ENCODE measurements at regions of chr22 and their contacts with region 1.

Region 1: DNA sequence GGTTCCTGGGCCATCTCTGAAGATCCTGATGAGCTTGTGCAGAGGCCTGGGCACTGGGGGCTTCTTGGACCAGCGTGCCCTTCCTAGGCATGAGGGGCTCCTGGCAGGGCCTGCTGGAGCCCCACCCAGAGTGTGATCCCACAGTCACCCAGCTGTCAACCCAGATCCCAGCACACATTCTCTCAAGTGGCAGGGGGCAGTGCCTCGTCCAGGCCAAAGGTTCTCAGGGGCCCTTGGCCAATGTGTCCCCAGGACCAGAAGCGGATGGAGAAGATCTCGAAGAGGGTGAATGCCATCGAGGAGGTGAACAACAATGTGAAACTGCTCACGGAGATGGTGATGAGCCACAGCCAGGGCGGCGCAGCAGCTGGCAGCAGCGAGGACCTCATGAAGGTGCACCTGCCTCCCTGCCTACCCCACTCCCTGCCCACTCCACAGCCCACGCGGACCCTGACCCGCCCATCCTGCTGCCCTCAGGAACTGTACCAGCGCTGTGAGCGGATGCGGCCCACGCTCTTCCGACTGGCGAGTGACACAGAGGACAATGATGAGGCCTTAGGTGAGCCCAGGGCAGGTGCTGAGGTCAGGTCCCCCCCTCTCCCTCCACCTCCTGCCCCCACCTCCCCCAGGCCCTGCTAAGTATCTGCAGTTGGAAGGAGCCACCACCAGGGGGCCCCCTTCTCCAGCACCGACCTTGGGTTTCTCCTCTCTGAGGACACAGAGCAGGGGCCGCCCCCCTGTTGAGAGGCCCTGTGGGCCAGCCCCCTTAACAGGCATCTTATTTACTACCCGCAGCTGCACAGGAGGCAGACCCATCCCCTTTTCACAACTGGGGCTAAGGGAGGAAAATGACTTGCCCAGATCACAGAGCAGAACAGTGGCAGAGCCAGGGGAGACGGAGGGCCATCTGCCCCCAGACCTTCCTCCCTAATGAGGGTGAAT is 14.7 kb downstream of the GGA1 start:
- DNase-seq: peak in 6 of 7 donors; percentile 59 to 85 (median 70)
- H3K4me3 ChIP-seq: no peak overlapping the region
- H3K27ac ChIP-seq: peak overlapping the region in 1 of 5 donors; percentile 21
- H3K4me1 ChIP-seq: peaks cover 0 to 19% of the 10 kb centered on the region in 2 donors
- H3K27me3 ChIP-seq: no peaks in the 10 kb centered on the region
- CTCF ChIP-seq: peak; percentile 47 to 90 (median 66)
- POLR2A ChIP-seq: no peak

Region 2: GRCh38 chr22:37581504-37581903 is 41.8 kb before region 1 on chr22:
- intact Hi-C with region 1: no loop called
- DNase-seq: peak; percentile 52 to 79 (median 66)
- H3K4me3 ChIP-seq: no peak overlapping the region
- H3K27ac ChIP-seq: peak overlapping the region in 2 of 5 donors; percentile 47 to 55
- H3K4me1 ChIP-seq: peaks cover 0 to 17% of the 10 kb centered on the region in 2 donors
- H3K27me3 ChIP-seq: no peaks in the 10 kb centered on the region
- CTCF ChIP-seq: no peak
- POLR2A ChIP-seq: no peak

Region 3: DNA sequence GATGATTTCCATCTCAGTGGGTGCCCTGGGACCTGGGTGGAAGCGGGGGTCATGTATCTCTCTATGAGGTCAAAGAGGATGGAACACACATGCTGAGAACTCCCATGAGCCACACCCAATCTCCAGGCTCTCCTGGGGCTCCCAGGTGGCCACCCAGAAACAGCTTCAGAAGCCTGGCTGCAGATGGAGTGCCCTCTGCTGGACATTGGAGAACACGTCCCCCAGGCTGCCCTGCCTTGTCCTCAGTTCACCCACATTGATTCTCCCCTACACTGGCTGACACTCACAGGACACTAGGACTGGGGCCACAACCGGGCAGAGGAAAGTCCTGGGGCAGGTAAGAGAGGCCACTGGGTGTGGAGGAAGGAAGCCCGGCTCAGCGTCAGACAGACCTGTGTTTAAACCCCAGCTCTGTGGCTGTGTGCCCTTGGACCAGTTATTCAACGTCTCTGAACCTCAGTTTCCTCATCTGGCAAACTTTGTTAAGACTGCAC is 58.3 kb after region 1 on chr22:
- intact Hi-C with region 1: loop called in 1 of 2 experiments (anchors 5 kb)
- DNase-seq: peak; percentile 71 to 93 (median 84)
- H3K4me3 ChIP-seq: no peak overlapping the region
- H3K27ac ChIP-seq: no peak overlapping the region
- H3K4me1 ChIP-seq: peaks cover 4 to 11% of the 10 kb centered on the region in 2 donors
- H3K27me3 ChIP-seq: no peaks in the 10 kb centered on the region
- CTCF ChIP-seq: peak; percentile 83 to 93 (median 91)
- POLR2A ChIP-seq: no peak

Region 4: GRCh38 chr22:37792494-37792893 is 169.1 kb after region 1 on chr22:
- intact Hi-C with region 1: loop called in 1 of 2 experiments (anchors 5 kb)
- DNase-seq: no peak
- H3K4me3 ChIP-seq: no peak overlapping the region
- H3K27ac ChIP-seq: no peak overlapping the region
- H3K4me1 ChIP-seq: no peaks in the 10 kb centered on the region
- H3K27me3 ChIP-seq: no peaks in the 10 kb centered on the region
- CTCF ChIP-seq: no peak
- POLR2A ChIP-seq: no peak

Region 5: GRCh38 chr22:37832022-37832857 is 208.9 kb after region 1 on chr22:
- intact Hi-C with region 1: no loop called
- DNase-seq: no peak
- H3K4me3 ChIP-seq: no peak overlapping the region
- H3K27ac ChIP-seq: no peak overlapping the region
- H3K4me1 ChIP-seq: no peaks in the 10 kb centered on the region
- H3K27me3 ChIP-seq: no peaks in the 10 kb centered on the region
- CTCF ChIP-seq: no peak
- POLR2A ChIP-seq: no peak